Astrocyte of the cerebellum (primary cell): ENCODE measurements at regions of chr10 and their contacts with region 1.

Region 1: DNA sequence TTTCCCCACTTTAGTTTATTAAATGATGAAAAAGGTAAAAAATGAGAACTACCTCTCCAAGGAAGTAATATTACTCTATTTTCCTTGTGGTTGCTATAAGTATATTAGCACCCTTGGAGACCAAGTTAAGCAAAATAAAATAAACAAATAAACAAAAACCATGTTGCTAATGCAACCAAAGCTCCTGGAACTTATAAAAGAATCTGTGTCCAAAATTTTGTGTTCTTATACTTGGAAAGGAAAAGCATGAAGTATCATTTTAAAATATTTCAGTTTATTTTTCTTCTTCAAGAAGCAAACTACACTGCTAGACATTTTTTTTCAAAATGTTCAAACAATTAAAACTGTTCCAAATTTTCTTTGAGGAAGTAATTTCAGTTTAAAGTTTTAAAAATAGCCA is 441.9 kb upstream of the LRRTM3 start:
- DNase-seq: no peak
- H3K4me3 ChIP-seq: no peak overlapping the region
- CTCF ChIP-seq: no peak

Region 2: GRCh38 chr10:66521481-66521880 is 37.5 kb after region 1 on chr10:
- in situ Hi-C with region 1: loop called (anchors 5 kb)
- DNase-seq: peak; percentile 3
- H3K4me3 ChIP-seq: no peak overlapping the region
- CTCF ChIP-seq: no peak

Region 3: DNA sequence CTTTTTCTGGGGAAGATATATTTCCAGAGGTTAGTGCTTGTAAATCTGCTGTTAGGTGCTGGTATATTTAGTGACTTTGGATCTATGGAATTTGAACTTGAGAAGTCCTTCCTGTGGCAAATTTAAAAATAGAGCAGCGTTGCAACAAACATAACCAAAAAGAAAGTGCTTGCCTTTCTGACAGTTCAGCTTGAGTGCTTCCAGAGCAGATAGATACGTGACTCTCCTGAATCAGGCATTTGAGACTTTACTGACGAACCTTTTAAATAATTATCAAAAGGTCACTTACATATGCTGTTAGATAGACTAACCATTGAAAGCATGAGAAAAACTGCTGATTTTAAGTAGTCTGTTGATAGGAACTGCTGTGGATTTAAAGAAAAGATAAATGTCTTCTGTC is 54.4 kb after region 1 on chr10:
- in situ Hi-C with region 1: no loop called
- DNase-seq: no peak
- H3K4me3 ChIP-seq: no peak overlapping the region
- CTCF ChIP-seq: no peak